Posterior cingulate gyrus (tissue), 11 donors: ENCODE measurements at regions of chr17 and their contacts with region 1.

Region 1: GRCh38 chr17:40168262-40168832 is 8.9 kb upstream of the RAPGEFL1 start:
- DNase-seq: peak in 3 of 10 donors; percentile 34 to 40 (median 35)

Region 2: GRCh38 chr17:40019140-40019991 is 149.0 kb before region 1 on chr17:
- intact Hi-C with region 1: loop called (anchors 10 kb)
- DNase-seq: peak in 2 of 10 donors; percentile 76

Region 3: GRCh38 chr17:40113110-40113906 is 55.0 kb before region 1 on chr17:
- intact Hi-C with region 1: loop called (anchors 1 kb)
- DNase-seq: peak; percentile 91 to 99 (median 95)

Region 4: DNA sequence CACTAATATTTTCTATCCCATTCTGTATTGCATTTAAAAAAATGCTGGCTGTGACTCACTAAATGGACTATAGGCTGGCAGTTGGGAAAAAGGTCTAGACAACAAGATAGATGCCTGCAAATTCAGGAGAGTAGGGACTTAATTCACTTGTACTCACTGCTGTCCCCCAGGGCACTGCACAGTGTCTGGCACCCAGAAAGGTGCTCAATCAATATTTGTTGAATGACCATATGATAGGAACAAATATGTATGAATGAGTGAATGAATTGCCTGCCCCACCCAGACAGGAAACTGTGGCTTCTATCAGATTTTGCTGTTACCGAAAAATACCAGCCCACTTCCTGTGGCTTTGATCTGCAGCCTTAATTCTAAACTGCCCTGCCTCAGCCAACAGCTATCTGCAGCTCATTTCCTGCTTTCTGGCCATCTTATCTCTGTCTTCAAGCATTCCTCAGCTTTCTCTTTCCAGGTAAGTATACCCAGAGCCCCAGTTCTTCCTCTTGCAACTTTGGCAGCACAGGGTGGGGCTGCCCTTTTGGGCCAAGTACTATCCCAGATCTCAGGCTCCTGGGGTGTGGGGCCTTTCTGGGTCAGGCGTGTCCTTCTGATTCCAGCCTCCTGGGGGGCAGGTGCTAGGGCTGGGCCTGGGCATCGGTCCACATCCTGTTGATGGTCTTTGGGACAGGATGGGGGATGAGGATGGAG is 348.4 kb after region 1 on chr17:
- intact Hi-C with region 1: no loop called
- DNase-seq: no peak